CD4-positive, alpha-beta T cell (primary cell): ENCODE measurements at regions of chr21 and their contacts with region 1.

Region 1: DNA sequence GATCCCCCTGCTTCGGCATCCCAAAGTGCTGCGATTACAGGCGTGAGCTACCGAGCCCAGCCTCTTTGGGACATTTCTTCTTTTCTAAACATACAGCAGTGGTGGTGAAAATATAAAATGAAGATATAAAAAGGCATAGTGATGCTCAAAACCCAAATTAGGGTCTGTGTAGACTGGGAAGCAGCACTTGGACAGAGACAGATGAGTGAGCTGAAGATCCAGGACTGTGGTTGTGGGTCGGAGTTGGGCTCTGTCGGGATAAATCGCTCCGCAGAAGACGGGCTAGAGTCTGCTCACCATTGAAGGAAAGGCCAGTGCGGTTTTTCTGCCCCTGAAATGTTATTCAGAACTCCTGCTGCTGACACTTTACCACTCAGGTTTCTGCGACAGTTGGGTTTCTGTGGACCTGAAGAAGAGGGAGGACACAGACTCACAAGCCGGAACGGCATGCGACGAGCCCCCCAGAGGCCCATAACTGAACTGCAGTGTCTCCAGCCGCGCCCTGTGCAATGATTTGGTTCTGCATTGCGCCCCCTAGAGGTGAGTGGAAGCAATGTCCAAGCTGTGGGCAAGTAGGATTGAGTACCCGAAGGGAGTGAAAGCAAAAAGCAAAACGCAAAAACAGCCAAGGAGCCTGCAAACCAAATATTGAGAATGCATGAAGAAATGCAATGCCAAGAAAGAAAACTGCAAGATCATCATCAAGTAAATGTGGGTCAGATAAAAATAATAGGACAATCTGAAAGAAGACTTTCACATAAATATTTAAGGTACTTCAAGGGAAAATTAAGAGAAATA is 66.6 kb downstream of the GABPA start:
- DNase-seq: peak; percentile 67 to 92 (median 78)
- ATAC-seq: peak; percentile 100
- H3K4me3 ChIP-seq: no peak overlapping the region
- H3K4me3 Mint-ChIP-seq: peak overlapping the region; percentile 6
- H3K27ac ChIP-seq: no peak overlapping the region
- H3K27ac Mint-ChIP-seq: no peak overlapping the region
- H3K4me1 ChIP-seq: peaks cover 2% of the 10 kb centered on the region
- H3K4me1 Mint-ChIP-seq: peaks cover 5% of the 10 kb centered on the region
- H3K27me3 ChIP-seq: no peaks in the 10 kb centered on the region
- H3K27me3 Mint-ChIP-seq: peaks cover 19% of the 10 kb centered on the region
- CTCF ChIP-seq: peak; percentile 92

Region 2: GRCh38 chr21:25790122-25790877 is 11.1 kb before region 1 on chr21:
- CTCF ChIA-PET with region 1: interaction called, 11 read pairs
- POLR2A ChIA-PET with region 1: no interaction called
- intact Hi-C with region 1: no loop called
- DNase-seq: peak in 4 of 14 experiments; percentile 10 to 34 (median 19)
- ATAC-seq: peak; percentile 51
- H3K4me3 ChIP-seq: peak overlapping the region; percentile 50
- H3K4me3 Mint-ChIP-seq: peak overlapping the region; percentile 81
- H3K27ac ChIP-seq: no peak overlapping the region
- H3K27ac Mint-ChIP-seq: no peak overlapping the region
- H3K4me1 ChIP-seq: peaks cover 5% of the 10 kb centered on the region
- H3K4me1 Mint-ChIP-seq: peaks cover 16% of the 10 kb centered on the region
- H3K27me3 ChIP-seq: peaks cover 0 to 14% of the 10 kb centered on the region in 2 experiments
- H3K27me3 Mint-ChIP-seq: peaks cover 15% of the 10 kb centered on the region
- CTCF ChIP-seq: peak; percentile 42